ENCODE measurements at regions of chr11 and their contacts with region 1.

Region 1: DNA sequence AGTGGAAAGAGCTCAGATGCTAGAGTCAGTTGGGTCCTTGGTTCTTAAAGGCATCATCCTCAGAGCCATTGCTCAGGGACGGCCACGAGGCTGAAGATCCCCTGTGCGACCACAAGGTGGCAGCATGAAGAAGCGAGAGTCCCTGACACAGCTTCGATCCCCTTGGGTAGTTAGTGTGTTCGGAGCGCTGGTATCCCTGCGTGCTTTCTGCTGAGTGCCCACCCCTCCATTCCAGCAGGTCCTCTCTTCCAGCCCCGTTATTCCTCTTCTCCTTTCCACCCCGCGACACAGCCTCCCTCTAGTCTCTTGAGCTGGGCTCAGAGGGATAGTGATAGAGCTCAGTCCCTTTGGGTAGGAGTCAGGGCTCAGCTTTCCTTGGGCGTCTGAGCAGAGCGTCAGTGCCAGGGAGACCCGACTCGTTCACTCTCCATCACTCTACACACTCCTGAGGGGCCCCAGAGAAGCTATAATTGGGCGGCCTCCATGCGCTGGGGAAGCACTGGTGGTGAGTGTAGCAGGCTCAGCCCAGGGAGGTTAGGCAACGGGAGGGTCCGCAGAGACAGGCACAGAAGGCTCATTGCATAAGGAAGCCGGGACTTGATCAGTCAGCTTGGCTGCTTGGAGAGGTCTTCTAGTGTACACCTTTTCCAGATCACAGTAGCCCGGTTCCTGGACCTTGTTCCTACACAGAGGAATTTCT is at the start of gene OR51D1:
- DNase-seq: peak; percentile 72
- CTCF ChIP-seq: peak; percentile 94

Region 2: GRCh38 chr11:4187055-4187988 is 449.8 kb before region 1 on chr11:
- CTCF ChIA-PET with region 1: interaction called, 11 read pairs
- POLR2A ChIA-PET with region 1: no interaction called
- DNase-seq: peak; percentile 91
- CTCF ChIP-seq: peak; percentile 94

Region 3: DNA sequence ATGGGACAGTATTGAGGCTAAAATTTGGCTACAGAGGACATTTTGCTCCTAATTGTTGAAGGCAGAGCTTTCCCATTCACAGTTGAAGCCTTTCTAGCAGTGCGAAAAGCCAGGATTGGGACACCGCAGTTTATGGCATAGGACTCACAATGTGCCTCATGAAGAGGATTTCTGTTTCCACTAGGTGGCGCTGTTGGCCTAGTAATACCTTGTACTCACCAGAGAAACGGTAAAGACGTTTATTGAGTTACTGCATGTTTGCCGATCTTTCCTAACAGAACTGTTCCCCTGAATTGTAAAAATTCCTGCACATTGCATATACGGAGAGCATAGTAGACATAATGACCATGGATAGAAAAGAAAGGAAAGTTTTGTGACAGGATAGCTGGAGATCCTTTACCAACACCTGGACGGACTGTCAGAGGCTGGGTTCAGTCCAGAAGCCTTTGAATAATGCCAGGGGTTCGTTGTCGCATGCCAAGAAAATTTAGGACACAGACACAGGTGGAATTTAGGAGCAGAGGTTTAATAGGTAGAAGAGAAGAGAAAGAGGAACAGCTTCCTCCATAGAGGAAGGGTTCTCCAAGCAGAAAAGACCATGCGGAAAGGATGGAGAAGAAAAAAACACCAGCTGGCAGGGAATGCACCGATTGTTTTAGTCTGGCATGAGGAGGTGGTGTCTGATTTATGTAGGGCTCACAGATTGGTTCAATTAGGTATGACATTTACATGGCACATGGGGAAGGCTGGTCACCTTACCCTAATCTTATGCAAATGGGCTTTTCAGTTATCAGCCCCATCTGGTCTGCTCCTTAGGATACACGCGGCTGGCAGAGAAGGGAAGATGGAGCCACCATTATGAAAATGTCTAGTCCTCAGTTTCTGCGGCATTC is 10.7 kb before region 1 on chr11:
- CTCF ChIA-PET with region 1: interaction called, 73 read pairs
- POLR2A ChIA-PET with region 1: no interaction called
- DNase-seq: no peak
- CTCF ChIP-seq: peak; percentile 60

Region 4: GRCh38 chr11:4658629-4659445 is 21.7 kb after region 1 on chr11:
- CTCF ChIA-PET with region 1: interaction called, 10 read pairs
- POLR2A ChIA-PET with region 1: no interaction called
- DNase-seq: no peak
- CTCF ChIP-seq: no peak

Region 5: GRCh38 chr11:4826425-4826824 is 189.3 kb after region 1 on chr11:
- CTCF ChIA-PET with region 1: interaction called, 11 read pairs
- POLR2A ChIA-PET with region 1: no interaction called
- DNase-seq: no peak
- CTCF ChIP-seq: no peak

Region 6: DNA sequence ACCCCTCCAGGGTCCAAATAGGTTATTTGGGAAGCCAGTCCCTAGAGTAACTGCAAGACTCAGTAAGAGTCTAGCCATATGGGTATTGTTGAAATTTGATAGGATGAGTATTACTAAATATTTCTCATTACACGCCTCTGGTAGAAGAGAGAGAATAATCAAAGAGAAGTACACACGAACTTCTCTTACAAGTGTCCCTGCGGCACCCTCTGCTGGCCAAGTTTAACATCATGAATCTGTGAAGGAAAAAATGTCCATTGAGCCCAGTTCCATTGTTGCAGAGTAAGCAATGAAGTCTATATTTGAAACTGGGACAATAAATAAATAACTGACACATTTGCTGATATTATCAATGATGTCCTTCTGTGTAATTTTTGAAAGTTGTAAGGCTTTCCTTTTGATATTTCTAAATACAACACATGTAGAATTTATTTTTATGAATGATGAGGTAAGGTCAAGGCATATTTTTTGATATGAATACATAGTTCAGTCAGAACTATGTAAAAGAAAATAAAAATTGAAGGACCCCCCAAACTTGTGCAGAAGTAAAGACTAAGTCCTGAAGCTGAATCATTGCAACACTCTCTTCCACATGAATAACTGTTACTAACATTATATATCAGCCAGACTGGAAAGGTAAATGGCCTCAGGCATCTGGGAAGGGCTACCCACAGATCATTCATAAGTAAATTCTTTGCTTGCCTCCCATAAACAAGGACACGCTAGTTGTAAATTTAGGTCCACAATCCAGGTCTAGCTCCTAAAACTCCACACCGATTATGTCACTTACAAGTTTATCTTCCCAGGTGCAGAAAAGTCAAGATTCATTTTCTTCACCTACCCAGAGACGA is 367.5 kb after region 1 on chr11:
- CTCF ChIA-PET with region 1: interaction called, 16 read pairs
- POLR2A ChIA-PET with region 1: no interaction called
- DNase-seq: peak; percentile 10
- CTCF ChIP-seq: peak; percentile 49